Dendritic cell treated with granulocyte-macrophage colony-stimulating factor and Interleukin-4, amounts not matched to agents 40 ng/mL and 50 ng/mL, for 4 days (primary cell): ENCODE measurements at regions of chr9 and their contacts with region 1.

Region 1: GRCh38 chr9:11962327-11962726 is 730.9 kb upstream of the TYRP1 start:
- H3K4me3 Mint-ChIP-seq: no peak overlapping the region
- H3K27ac Mint-ChIP-seq: no peak overlapping the region
- H3K4me1 Mint-ChIP-seq: no peaks in the 10 kb centered on the region
- H3K27me3 Mint-ChIP-seq: no peaks in the 10 kb centered on the region

Region 2: GRCh38 chr9:11893331-11893730 is 69.0 kb before region 1 on chr9:
- intact Hi-C with region 1: loop called (anchors 10 kb)
- H3K4me3 Mint-ChIP-seq: no peak overlapping the region
- H3K27ac Mint-ChIP-seq: no peak overlapping the region
- H3K4me1 Mint-ChIP-seq: no peaks in the 10 kb centered on the region
- H3K27me3 Mint-ChIP-seq: no peaks in the 10 kb centered on the region

Region 3: GRCh38 chr9:11915699-11916098 is 46.6 kb before region 1 on chr9:
- intact Hi-C with region 1: loop called (anchors 10 kb)
- H3K4me3 Mint-ChIP-seq: no peak overlapping the region
- H3K27ac Mint-ChIP-seq: no peak overlapping the region
- H3K4me1 Mint-ChIP-seq: no peaks in the 10 kb centered on the region
- H3K27me3 Mint-ChIP-seq: no peaks in the 10 kb centered on the region